ENCODE measurements at regions of chr17 and their contacts with region 1.

Region 1: GRCh38 chr17:57849874-57850754 is at the start of gene MRPS23:
- DNase-seq: peak; percentile 99
- ATAC-seq: peak; percentile 96
- H3K4me3 ChIP-seq: peak within 1 kb of the TSS; percentile 73
- H3K27ac ChIP-seq: peak within 1 kb of the TSS; percentile 89
- H3K4me1 ChIP-seq: peaks cover 10% of the 10 kb centered on the region
- H3K27me3 ChIP-seq: no peaks in the 10 kb centered on the region
- CTCF ChIP-seq: no peak
- POLR2A ChIP-seq: peak; percentile 61; the same call in 1 of the 2 replicates
- RAD21 ChIP-seq: no peak
- total RNA-seq, gene MRPS23: 37.3 and 41.7 TPM in 2 replicates

Region 2: DNA sequence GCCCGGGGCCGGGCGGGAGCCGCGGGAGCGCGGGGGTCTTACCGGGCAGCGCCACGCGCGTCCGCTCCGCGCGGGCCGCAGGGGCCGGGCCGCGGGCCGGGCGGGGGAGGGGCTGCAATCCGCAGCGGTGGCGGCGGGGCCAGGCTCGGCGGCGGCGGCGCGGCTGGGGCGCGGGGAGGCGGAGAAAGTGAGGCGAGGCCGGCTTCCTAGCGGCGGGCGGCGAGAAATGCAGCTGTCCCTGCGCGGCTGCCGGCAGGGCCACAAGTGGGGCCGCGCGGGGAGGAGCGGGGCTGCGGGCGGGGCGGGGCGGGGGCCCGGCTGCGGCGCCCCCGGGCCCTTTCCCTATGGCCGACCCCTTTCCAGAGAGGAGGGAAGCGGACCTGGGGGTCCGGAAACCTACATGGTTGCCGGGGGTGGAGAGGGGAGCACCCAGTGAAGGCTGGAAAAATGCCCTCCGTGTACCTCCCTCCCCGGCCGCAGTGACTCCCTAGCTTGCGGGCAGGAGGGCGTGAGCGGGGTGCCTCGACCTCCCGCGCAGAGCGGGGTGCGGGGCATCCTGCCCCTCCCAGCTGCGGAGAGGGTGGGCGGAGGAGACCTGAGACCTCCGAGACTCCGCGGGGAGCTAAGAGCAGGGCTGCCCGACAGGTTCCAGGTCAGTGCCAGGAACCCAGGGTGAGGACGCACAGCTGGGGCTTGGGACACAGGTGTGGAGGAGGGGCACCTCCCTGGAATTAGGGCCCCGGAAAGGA is 105.2 kb after region 1 on chr17 and contains the start of gene CUEDC1:
- CTCF ChIA-PET with region 1: no interaction called
- POLR2A ChIA-PET with region 1: interaction called, 19 read pairs
- dilution Hi-C with region 1: no loop called
- in situ Hi-C with region 1: no loop called
- intact Hi-C with region 1: no loop called
- DNase-seq: peak; percentile 39
- ATAC-seq: peak; percentile 84
- H3K4me3 ChIP-seq: peak within 1 kb of the TSS; percentile 93
- H3K27ac ChIP-seq: peak within 1 kb of the TSS; percentile 79
- H3K4me1 ChIP-seq: peaks cover 27% of the 10 kb centered on the region
- H3K27me3 ChIP-seq: no peaks in the 10 kb centered on the region
- CTCF ChIP-seq: peak; percentile 52
- POLR2A ChIP-seq: no peak
- RAD21 ChIP-seq: peak; percentile 34
- total RNA-seq, gene CUEDC1: 4.1 and 4.2 TPM in 2 replicates

Region 3: DNA sequence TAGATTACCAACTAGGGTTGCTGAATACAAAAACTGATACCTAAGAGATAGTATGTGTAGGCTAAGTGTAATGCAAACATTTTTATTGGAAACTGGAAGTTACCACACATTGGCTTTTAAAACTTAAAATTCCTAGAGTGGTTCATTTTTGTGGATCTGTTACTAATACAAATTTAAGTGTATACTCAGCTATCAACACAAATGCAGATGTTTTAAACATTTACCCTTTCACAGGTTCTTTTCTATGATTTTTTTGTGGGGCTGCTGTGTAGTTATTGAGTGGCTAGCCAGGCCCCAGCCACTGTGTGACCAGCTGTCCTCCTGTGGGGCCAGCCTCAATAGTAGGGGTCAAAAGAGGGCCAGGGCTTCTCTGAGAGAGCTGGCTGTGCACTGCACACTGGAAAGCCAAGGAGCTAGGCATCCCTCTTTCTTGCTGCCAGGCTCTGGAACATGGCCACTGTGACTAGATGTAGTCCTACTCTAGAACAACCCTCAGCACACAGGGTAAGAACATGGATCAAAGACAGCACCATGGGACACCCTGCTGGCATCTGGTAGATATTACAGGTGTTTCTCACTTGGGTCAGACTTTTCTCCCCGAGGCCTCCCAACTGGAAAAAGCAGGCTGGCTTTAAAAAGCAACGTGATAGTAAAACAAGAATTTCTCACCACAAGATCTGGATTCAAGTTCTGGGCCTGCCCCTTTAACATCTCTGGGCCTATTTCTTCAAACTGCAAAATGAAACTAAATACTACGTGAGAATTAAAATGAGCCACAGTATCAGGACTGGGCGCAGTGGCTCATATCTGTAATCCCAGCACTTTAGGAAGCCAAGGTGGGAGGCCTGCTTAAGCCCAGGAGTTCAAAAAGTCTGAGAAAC is 145.2 kb after region 1 on chr17:
- CTCF ChIA-PET with region 1: interaction called, 26 read pairs
- POLR2A ChIA-PET with region 1: no interaction called
- dilution Hi-C with region 1: loop called (anchors 25 kb)
- in situ Hi-C with region 1: loop called (anchors 5 kb)
- intact Hi-C with region 1: loop called (anchors 2 kb)
- DNase-seq: peak; percentile 81
- ATAC-seq: peak; percentile 91
- H3K4me3 ChIP-seq: no peak overlapping the region
- H3K27ac ChIP-seq: no peak overlapping the region
- H3K4me1 ChIP-seq: peaks cover 2% of the 10 kb centered on the region; the same call in 1 of the 2 replicates
- H3K27me3 ChIP-seq: no peaks in the 10 kb centered on the region
- CTCF ChIP-seq: peak; percentile 73
- POLR2A ChIP-seq: no peak
- RAD21 ChIP-seq: peak; percentile 90

Region 4: GRCh38 chr17:58082870-58083490 is 232.9 kb after region 1 on chr17 and contains the start of gene DYNLL2:
- CTCF ChIA-PET with region 1: no interaction called
- POLR2A ChIA-PET with region 1: no interaction called
- dilution Hi-C with region 1: no loop called
- in situ Hi-C with region 1: no loop called
- intact Hi-C with region 1: loop called (anchors 1 kb)
- DNase-seq: peak; percentile 85
- ATAC-seq: peak; percentile 94
- H3K4me3 ChIP-seq: peak within 1 kb of the TSS; percentile 74
- H3K27ac ChIP-seq: peak within 1 kb of the TSS; percentile 88
- H3K4me1 ChIP-seq: peaks cover 13% of the 10 kb centered on the region
- H3K27me3 ChIP-seq: peaks cover 10% of the 10 kb centered on the region
- CTCF ChIP-seq: no peak
- POLR2A ChIP-seq: peak; percentile 87
- RAD21 ChIP-seq: no peak
- total RNA-seq, gene DYNLL2: 9.1 and 12.8 TPM in 2 replicates

Region 5: DNA sequence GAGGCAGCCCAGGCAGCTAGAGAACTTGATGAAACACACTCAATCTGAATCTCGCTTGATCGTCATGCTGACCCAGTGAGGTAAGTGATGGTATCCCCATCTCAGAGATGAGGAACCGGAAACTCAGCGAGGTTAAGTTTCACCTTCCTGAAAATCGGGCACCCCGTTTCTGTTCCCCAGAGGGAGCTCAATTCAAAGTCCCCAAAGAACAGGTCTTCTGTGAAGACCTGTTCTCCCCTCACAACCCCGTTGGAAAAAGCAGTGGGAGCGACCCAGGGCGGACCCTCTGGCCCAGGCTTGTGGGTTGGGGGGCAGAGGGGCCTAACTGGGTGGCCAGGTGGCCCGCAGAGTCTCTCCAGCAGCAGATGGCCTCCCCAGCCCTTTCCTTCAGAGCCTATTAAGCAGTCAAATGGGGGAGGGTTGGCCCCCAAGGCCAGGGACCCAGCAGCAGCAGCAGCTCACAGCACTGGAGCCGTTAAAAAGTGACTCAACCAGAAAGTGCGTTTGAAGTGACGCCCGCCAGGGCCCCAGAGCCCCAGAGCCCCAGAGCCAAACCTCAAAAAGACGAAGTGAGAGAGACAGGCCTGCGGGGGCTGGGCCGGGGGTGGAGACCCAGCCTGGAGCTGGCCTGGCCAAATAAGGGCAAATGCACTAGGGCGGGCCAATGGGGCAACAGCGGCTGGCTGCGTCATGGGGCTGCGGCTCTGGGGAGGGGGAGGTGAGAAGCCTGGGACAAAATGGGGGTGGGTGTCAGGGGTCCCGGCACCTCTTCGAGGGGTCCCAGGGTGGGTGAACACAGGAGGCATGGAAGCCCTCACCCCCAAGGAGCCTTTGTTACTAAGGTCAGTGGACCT is 487.7 kb after region 1 on chr17:
- CTCF ChIA-PET with region 1: no interaction called
- POLR2A ChIA-PET with region 1: no interaction called
- dilution Hi-C with region 1: no loop called
- in situ Hi-C with region 1: loop called (anchors 25 kb)
- intact Hi-C with region 1: no loop called
- DNase-seq: peak; percentile 96
- ATAC-seq: peak; percentile 91
- H3K4me3 ChIP-seq: no peak overlapping the region
- H3K27ac ChIP-seq: peak overlapping the region; percentile 98
- H3K4me1 ChIP-seq: peaks cover 38% of the 10 kb centered on the region
- H3K27me3 ChIP-seq: no peaks in the 10 kb centered on the region
- CTCF ChIP-seq: 0 out of 2 replicates have a peak, but pooled peaks have one; percentile 7
- POLR2A ChIP-seq: no peak; the same call in 1 of the 2 replicates
- RAD21 ChIP-seq: peak; percentile 18; the same call in 1 of the 2 replicates

Measured in IMR-90 (cell line).